Prostate gland (tissue), 2 donors: ENCODE measurements at regions of chr11 and their contacts with region 1.

Region 1: DNA sequence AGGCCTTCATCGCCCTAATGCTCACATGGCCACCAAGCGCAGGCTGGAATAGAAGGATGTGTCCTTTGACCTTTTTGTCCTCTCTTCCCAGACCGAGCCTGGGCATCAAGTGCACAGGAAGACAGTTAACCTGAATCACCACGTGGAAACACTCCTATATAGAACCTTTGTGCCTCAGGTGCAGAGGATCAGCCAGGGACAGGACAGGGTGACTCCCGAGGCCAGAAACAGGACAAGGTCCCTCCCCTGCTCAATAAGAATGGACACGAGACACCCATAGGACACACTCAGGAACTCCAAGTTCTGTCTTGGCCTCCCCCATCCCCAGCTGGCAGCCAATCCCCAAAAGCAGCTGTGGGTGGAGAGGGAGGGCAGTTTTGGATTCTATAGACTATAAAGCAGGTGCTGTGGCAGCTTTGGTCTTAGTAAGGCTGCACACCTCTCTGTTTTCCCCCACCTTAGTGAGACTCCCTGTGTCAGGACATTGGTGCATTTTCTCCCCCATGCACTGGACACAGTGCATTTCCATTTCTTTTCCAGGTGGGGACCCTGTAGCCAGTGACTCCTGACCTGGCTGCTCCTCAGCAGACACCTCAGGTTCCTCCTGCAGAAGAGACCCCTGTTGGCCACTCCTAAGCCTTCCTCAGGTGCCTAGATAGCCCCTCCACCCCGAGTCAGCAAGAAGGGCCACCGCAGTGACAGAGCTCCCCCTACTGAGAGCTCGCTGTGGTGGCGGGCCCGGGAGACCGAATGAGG is 43.6 kb upstream of the POU2AF1 start:
- DNase-seq: peak; percentile 59
- H3K4me3 ChIP-seq: no peak overlapping the region
- H3K27ac ChIP-seq: no peak overlapping the region
- H3K4me1 ChIP-seq: peaks cover 6% of the 10 kb centered on the region
- H3K27me3 ChIP-seq: no peaks in the 10 kb centered on the region
- CTCF ChIP-seq: peak; percentile 50 to 86 (median 76)
- POLR2A ChIP-seq: no peak

Region 2: GRCh38 chr11:111283945-111284481 is 138.7 kb before region 1 on chr11:
- intact Hi-C with region 1: loop called (anchors 2 kb)
- DNase-seq: no peak
- H3K4me3 ChIP-seq: no peak overlapping the region
- H3K27ac ChIP-seq: no peak overlapping the region
- H3K4me1 ChIP-seq: no peaks in the 10 kb centered on the region
- H3K27me3 ChIP-seq: no peaks in the 10 kb centered on the region
- CTCF ChIP-seq: no peak
- POLR2A ChIP-seq: no peak

Region 3: GRCh38 chr11:111299101-111300026 is 123.3 kb before region 1 on chr11:
- intact Hi-C with region 1: loop called (anchors 5 kb)
- DNase-seq: peak; percentile 54
- H3K4me3 ChIP-seq: peak overlapping the region; percentile 57 to 64
- H3K27ac ChIP-seq: peak overlapping the region; percentile 84 to 93
- H3K4me1 ChIP-seq: no peaks in the 10 kb centered on the region
- H3K27me3 ChIP-seq: no peaks in the 10 kb centered on the region
- CTCF ChIP-seq: peak in 3 of 4 experiments; percentile 24 to 69 (median 60)
- POLR2A ChIP-seq: peak; percentile 20

Region 4: DNA sequence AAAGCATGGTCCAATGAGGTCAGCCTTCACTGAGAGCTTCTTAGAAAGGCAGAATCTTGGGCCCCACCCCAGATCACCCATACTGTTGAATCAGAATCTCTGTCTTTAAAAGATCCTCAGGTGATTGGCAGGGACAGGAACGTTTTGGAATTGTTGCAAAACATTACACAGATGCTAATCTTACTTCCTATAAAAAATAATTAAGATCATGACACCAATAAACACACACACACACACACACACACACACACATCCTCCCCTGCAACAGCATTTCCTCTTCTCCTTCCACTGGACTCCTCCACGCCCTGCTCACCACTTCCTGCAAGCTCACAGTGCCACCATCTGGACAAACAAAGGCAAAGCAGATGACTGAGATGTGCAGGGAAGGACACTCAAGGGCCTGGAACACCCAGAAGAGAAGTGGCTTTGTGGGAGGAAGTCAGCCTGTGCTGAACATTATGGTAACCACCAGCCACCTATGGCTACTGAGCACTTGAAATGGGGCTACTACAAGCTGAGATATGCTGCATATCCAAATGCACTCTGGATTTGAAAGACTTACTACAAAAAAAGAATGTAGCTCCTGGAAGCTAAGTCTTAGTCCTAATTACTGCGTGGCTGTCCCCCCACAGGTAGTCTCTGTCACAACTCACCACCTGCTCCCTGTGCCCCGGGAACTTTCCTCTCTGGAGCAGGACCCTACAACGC is 23.9 kb after region 1 on chr11:
- intact Hi-C with region 1: no loop called
- DNase-seq: peak; percentile 81
- H3K4me3 ChIP-seq: no peak overlapping the region
- H3K27ac ChIP-seq: no peak overlapping the region
- H3K4me1 ChIP-seq: no peaks in the 10 kb centered on the region
- H3K27me3 ChIP-seq: no peaks in the 10 kb centered on the region
- CTCF ChIP-seq: peak; percentile 28 to 92 (median 80)
- POLR2A ChIP-seq: no peak